ENCODE measurements at regions of chr5 and their contacts with region 1.

Region 1: DNA sequence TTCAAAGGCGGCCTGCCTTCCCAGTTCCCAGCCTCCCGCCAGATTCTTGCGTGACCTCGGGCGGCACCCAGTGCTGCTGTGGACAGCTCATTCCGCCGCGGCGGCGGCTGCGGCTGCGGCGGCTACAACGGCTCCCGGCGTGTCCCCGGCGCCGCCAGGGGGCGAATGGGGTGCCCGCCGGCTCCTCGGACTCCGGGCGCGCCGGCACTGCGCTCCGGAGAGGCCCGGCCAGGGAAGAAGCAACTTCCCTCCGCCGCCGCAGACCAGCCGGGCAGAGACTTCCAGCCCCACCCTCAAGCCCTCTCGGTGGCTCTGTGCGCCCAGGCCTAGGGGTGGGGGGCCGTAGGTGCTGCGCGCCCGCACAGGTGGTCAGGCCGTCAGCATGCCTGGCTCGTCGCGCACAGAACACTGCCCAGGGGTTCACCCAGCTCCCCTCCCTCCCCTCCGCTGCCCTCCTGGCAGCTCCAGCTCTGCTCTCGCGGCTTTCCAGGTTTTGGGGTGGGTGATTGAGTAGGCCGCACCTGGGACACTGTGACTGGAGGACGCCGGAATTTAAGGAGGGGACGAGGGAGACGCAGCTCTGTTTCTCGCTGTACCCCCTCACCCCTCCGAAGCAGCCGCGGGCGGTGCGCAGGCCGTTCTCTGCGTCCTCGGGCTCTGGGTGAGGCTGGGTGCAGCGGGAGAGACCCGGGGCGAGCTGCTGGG is 20.2 kb downstream of the IGIP start:
- DNase-seq: peak; percentile 81
- H3K27ac ChIP-seq: no peak overlapping the region
- CTCF ChIP-seq: peak; percentile 97

Region 2: GRCh38 chr5:140075371-140075770 is 70.6 kb before region 1 on chr5:
- CTCF ChIA-PET with region 1: interaction called, 16 read pairs
- POLR2A ChIA-PET with region 1: no interaction called
- DNase-seq: peak; percentile 44
- H3K27ac ChIP-seq: no peak overlapping the region
- CTCF ChIP-seq: peak; percentile 45; the same call in 1 of the 2 replicates

Region 3: GRCh38 chr5:140113699-140114263 is 32.2 kb before region 1 on chr5 and contains the start of gene PURA:
- CTCF ChIA-PET with region 1: interaction called, 12 read pairs
- POLR2A ChIA-PET with region 1: no interaction called
- DNase-seq: peak; percentile 97
- H3K27ac ChIP-seq: peak within 1 kb of the TSS; percentile 95
- CTCF ChIP-seq: peak; percentile 21; the same call in 1 of the 2 replicates

Region 4: GRCh38 chr5:140131967-140132409 is 14.0 kb before region 1 on chr5:
- CTCF ChIA-PET with region 1: interaction called, 10 read pairs
- POLR2A ChIA-PET with region 1: interaction called, 11 read pairs
- DNase-seq: peak; percentile 96
- H3K27ac ChIP-seq: no peak overlapping the region; the same call in 1 of the 2 replicates
- CTCF ChIP-seq: no peak

Measured in RWPE1 (cell line).